AG04449 (cell line): ENCODE measurements at regions of chr16 and their contacts with region 1.

Region 1: DNA sequence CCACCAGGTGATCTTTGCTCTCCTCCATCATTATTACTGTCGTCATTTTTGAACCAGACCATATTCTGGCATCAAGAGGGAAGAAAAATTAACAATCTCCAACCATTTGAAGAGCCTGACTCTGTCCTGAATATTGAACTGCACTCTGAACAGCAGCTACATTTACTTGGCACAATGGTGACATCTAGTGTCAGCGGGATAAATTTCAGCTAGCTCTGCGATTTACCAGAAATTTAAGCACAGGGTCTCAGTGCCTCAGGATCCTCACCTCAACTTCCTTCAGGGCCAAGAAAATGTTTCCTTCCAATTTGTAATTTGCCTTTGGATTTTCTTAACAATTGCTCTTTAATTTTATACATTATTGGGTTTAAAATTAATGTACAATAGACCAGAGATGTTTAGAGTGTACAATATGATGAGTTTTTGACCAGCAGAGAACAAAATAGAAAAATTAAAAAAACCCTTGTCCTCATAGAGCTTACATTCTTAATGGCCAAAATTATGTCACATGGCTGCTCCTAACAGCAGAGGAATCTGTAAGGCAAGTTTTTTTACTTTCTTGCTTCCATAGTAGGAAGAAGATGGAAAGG is 10.7 kb upstream of the ZNF19 start:
- DNase-seq: no peak
- H3K4me3 ChIP-seq: no peak overlapping the region
- CTCF ChIP-seq: peak; percentile 63

Region 2: GRCh38 chr16:71358464-71358998 is 141.3 kb before region 1 on chr16 and contains the start of gene CALB2:
- CTCF ChIA-PET with region 1: interaction called, 20 read pairs
- POLR2A ChIA-PET with region 1: no interaction called
- DNase-seq: no peak
- H3K4me3 ChIP-seq: peak within 1 kb of the TSS; percentile 44
- CTCF ChIP-seq: peak; percentile 82

Region 3: GRCh38 chr16:71426072-71426879 is 73.6 kb before region 1 on chr16:
- CTCF ChIA-PET with region 1: interaction called, 173 read pairs
- POLR2A ChIA-PET with region 1: no interaction called
- DNase-seq: peak; percentile 67
- H3K4me3 ChIP-seq: peak overlapping the region; percentile 40
- CTCF ChIP-seq: no peak

Region 4: DNA sequence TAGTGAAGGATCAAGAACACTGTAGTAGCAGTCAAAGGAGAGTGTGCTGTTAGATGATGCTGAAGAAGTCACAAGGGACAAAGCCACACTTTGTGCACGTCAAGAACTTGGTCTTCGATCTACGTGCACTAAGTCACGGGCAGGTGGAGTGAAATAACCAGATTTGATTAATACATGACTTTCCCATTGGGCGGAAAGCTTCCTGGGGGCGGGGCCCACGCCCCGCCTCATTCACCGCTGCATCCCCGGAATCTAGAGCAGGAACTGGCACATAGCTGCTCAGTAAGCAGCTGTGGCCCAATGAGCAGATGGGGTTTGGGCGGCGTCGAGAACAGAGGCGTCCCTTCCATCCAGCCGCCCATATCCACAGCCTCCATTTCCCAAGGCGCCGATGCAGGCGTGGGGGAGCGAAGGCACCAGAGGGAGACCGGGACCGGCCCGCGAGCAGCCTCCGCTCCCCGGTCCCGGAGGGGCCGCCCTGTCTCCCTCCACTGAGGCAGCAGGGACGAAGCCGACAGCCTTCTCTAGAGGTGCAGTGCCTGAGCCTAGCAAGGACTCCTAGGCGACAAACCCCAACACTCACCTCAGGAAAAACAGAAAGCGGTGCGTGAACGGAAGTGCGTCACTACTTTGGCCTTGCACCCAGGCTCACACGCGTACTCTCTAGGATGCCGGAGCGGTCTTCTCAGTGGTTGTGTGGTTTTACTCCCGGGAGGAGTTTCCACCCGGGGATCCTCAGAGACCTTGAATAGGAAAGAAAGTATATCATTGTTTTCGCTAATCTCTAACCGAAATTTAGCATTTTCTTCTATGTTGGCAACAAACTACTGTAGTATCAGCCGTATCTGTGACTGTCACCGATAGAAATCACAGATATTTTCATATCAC is 15.6 kb before region 1 on chr16:
- CTCF ChIA-PET with region 1: interaction called, 57 read pairs
- POLR2A ChIA-PET with region 1: no interaction called
- DNase-seq: peak; percentile 82
- H3K4me3 ChIP-seq: peak overlapping the region; percentile 93
- CTCF ChIP-seq: no peak

Region 5: GRCh38 chr16:71537643-71538042 is 37.8 kb after region 1 on chr16:
- CTCF ChIA-PET with region 1: interaction called, 23 read pairs
- POLR2A ChIA-PET with region 1: no interaction called
- DNase-seq: no peak
- H3K4me3 ChIP-seq: no peak overlapping the region
- CTCF ChIP-seq: peak; percentile 77